ENCODE measurements at regions of chr7 and their contacts with region 1.

Region 1: DNA sequence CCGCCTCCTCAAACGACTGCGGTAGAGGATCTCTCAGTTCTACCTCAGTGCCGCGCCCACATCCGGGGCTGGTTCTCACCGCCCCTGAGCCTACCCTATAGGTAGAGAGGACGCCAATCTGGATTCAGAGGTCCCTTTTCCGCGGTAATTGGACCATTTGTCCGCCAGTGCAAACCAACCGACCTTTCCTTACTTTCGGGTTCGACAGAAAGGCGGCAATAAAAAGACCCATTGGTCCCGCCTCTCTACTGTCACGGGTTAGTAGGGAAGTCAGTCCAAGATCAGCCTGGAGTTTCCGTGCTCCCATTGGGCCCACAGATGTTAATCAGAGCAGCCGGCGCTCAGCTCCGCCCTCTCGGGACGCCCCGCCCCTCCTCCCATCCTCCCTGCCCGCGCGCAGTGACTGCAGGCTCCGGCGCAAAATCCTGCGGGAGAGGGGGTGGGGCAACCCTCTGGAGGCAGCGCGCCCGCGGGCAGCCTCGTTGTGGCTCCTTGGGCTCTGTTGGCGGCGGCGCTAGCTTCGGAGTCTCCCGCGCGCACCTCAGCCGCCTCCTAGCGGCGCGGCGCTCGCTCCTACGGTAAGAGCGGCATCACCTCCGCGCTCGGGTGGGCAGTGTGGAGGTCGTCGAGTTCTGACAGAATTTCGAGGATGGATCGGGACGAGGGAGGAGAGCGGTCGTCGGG is at the starts of genes PHTF2 and TMEM60:
- DNase-seq: peak; percentile 99
- ATAC-seq: peak; percentile 90
- H3K4me3 ChIP-seq: peak within 1 kb of the TSS; percentile 86
- H3K27ac ChIP-seq: peak within 1 kb of the TSS; percentile 53
- H3K4me1 ChIP-seq: peaks cover 19% of the 10 kb centered on the region
- H3K27me3 ChIP-seq: no peaks in the 10 kb centered on the region
- CTCF ChIP-seq: peak; percentile 54
- total RNA-seq, gene PHTF2: 13.9 and 20.4 TPM in 2 replicates
- total RNA-seq, gene TMEM60: 6.9 and 8.1 TPM in 2 replicates

Region 2: GRCh38 chr7:77812290-77812685 is 13.8 kb after region 1 on chr7:
- CTCF ChIA-PET with region 1: interaction called, 13 read pairs
- POLR2A ChIA-PET with region 1: no interaction called
- intact Hi-C with region 1: no loop called
- DNase-seq: peak; percentile 53
- ATAC-seq: peak; percentile 88
- H3K4me3 ChIP-seq: no peak overlapping the region; the same call in 1 of the 2 replicates
- H3K27ac ChIP-seq: peak overlapping the region; percentile 44
- H3K4me1 ChIP-seq: peaks cover 12% of the 10 kb centered on the region
- H3K27me3 ChIP-seq: no peaks in the 10 kb centered on the region
- CTCF ChIP-seq: no peak

Measured in PC-3 (cell line).